GM10248 (cell line): ENCODE measurements at regions of chr10 and their contacts with region 1.

Region 1: GRCh38 chr10:95693668-95694534 is at the start of gene TCTN3:
- DNase-seq: peak; percentile 99
- CTCF ChIP-seq: peak; percentile 98

Region 2: GRCh38 chr10:95675403-95676112 is 18.3 kb before region 1 on chr10:
- CTCF ChIA-PET with region 1: interaction called, 16 read pairs
- POLR2A ChIA-PET with region 1: no interaction called
- DNase-seq: no peak
- CTCF ChIP-seq: no peak

Region 3: GRCh38 chr10:95728526-95728925 is 34.6 kb after region 1 on chr10:
- CTCF ChIA-PET with region 1: interaction called, 15 read pairs
- POLR2A ChIA-PET with region 1: no interaction called
- DNase-seq: no peak
- CTCF ChIP-seq: no peak

Region 4: GRCh38 chr10:95783741-95784140 is 89.8 kb after region 1 on chr10:
- CTCF ChIA-PET with region 1: interaction called, 82 read pairs
- POLR2A ChIA-PET with region 1: interaction called, 3 read pairs
- DNase-seq: peak; percentile 26
- CTCF ChIP-seq: no peak

Region 5: GRCh38 chr10:95832216-95833041 is 138.5 kb after region 1 on chr10:
- CTCF ChIA-PET with region 1: interaction called, 305 read pairs
- POLR2A ChIA-PET with region 1: interaction called, 4 read pairs
- DNase-seq: peak; percentile 67
- CTCF ChIP-seq: no peak

Region 6: GRCh38 chr10:95864906-95865813 is 171.3 kb after region 1 on chr10:
- CTCF ChIA-PET with region 1: interaction called, 108 read pairs
- POLR2A ChIA-PET with region 1: no interaction called
- DNase-seq: peak; percentile 65
- CTCF ChIP-seq: peak; percentile 52

Region 7: GRCh38 chr10:95907456-95908253 is 213.8 kb after region 1 on chr10 and contains the start of gene CC2D2B:
- CTCF ChIA-PET with region 1: interaction called, 10 read pairs
- POLR2A ChIA-PET with region 1: no interaction called
- DNase-seq: peak; percentile 84
- CTCF ChIP-seq: no peak

Region 8: GRCh38 chr10:96556003-96556402 is 862.1 kb after region 1 on chr10:
- CTCF ChIA-PET with region 1: no interaction called
- POLR2A ChIA-PET with region 1: no interaction called
- DNase-seq: no peak
- CTCF ChIP-seq: peak; percentile 49